ENCODE measurements at regions of chr1 and their contacts with region 1.

Region 1: DNA sequence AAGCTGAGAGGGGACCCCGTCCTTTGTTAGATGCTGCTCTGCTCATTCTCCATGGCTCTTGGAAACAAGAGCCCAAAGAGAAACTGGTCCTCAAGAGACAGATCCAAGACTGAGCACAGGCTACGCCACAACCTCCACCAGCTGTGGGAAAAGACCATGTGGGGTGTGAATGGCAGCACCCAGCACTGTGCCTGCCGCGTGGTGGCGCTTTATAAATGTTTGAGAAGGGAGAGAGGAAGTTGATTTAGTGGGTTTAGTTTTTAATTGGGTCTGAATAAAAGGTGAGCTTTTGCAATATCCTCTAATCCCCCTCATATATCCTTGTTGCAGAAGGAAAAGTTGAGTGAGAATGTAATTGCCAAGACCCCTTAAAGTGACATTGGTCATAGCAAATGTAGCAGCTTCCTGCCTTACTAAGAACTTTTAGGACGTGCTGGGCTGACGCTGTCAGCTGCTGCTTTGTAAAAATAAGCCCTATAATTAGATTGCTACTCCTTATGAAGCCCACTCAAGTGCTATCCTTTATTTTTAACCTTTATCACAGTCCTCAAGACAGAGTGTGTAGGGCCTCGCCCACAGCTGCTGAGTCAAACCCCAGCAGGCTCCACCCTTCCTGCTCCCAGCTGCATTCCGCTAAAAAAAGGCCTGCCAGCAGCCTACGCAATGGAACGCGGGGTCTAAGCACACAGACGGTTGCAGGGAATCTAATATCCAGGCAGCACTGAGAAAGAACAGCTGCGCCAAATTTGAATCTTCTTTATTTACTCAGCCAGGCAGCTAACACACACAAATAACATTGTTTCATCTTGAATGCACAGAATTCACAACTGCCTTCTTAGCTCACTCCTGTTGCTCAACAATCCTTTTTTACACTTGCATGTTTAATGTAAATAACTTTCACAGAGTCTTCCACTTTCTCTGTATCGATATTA is 47.4 kb upstream of the PRDX6 start:
- DNase-seq: no peak
- ATAC-seq: peak; percentile 92
- H3K4me3 ChIP-seq: no peak overlapping the region
- H3K27ac ChIP-seq: peak overlapping the region; percentile 7
- H3K4me1 ChIP-seq: peaks cover 19% of the 10 kb centered on the region
- H3K27me3 ChIP-seq: no peaks in the 10 kb centered on the region
- CTCF ChIP-seq: peak; percentile 64 to 76 (median 75)
- EP300 ChIP-seq: no peak
- POLR2A ChIP-seq: peak; percentile 17; the same call in 1 of the 2 replicates
- RAD21 ChIP-seq: peak; percentile 46

Region 2: GRCh38 chr1:173255214-173255813 is 174.4 kb before region 1 on chr1:
- CTCF ChIA-PET with region 1: interaction called, 17 read pairs
- POLR2A ChIA-PET with region 1: no interaction called
- RAD21 ChIA-PET with region 1: interaction called, 12 read pairs
- SMC1A ChIA-PET with region 1: interaction called, 9 read pairs
- in situ Hi-C with region 1: no loop called
- intact Hi-C with region 1: no loop called
- DNase-seq: peak; percentile 16
- ATAC-seq: peak; percentile 67
- H3K4me3 ChIP-seq: no peak overlapping the region
- H3K27ac ChIP-seq: no peak overlapping the region
- H3K4me1 ChIP-seq: peaks cover 4% of the 10 kb centered on the region; the same call in 1 of the 2 replicates
- H3K27me3 ChIP-seq: no peaks in the 10 kb centered on the region
- CTCF ChIP-seq: peak; percentile 67 to 80 (median 70)
- EP300 ChIP-seq: no peak
- POLR2A ChIP-seq: no peak
- RAD21 ChIP-seq: peak; percentile 68

Region 3: GRCh38 chr1:173485307-173485805 is 55.6 kb after region 1 on chr1:
- CTCF ChIA-PET with region 1: interaction called, 11 read pairs
- POLR2A ChIA-PET with region 1: no interaction called
- RAD21 ChIA-PET with region 1: no interaction called
- SMC1A ChIA-PET with region 1: interaction called, 8 read pairs
- in situ Hi-C with region 1: no loop called
- intact Hi-C with region 1: no loop called
- DNase-seq: no peak
- ATAC-seq: no peak
- H3K4me3 ChIP-seq: no peak overlapping the region
- H3K27ac ChIP-seq: no peak overlapping the region
- H3K4me1 ChIP-seq: peaks cover 4% of the 10 kb centered on the region
- H3K27me3 ChIP-seq: no peaks in the 10 kb centered on the region
- CTCF ChIP-seq: no peak
- EP300 ChIP-seq: no peak
- POLR2A ChIP-seq: no peak
- RAD21 ChIP-seq: no peak

Region 4: GRCh38 chr1:173824331-173825081 is 394.8 kb after region 1 on chr1 and contains the starts of genes CENPL and DARS2:
- CTCF ChIA-PET with region 1: interaction called, 25 read pairs
- POLR2A ChIA-PET with region 1: no interaction called
- RAD21 ChIA-PET with region 1: interaction called, 31 read pairs
- SMC1A ChIA-PET with region 1: interaction called, 5 read pairs
- in situ Hi-C with region 1: loop called (anchors 5 kb)
- intact Hi-C with region 1: loop called (anchors 2 kb)
- DNase-seq: peak; percentile 94
- ATAC-seq: peak; percentile 87
- H3K4me3 ChIP-seq: peak within 1 kb of the TSS; percentile 92
- H3K27ac ChIP-seq: peak within 1 kb of the TSS; percentile 91
- H3K4me1 ChIP-seq: no peaks in the 10 kb centered on the region; the same call in 1 of the 2 replicates
- H3K27me3 ChIP-seq: no peaks in the 10 kb centered on the region
- CTCF ChIP-seq: no peak
- EP300 ChIP-seq: no peak; a peak in 1 of 4 replicates
- POLR2A ChIP-seq: peak; percentile 83
- RAD21 ChIP-seq: no peak
- polyA plus RNA-seq, gene CENPL: 14.9 to 26.7 TPM
- polyA plus RNA-seq, gene DARS2: 23.9 to 25.2 TPM

Region 5: DNA sequence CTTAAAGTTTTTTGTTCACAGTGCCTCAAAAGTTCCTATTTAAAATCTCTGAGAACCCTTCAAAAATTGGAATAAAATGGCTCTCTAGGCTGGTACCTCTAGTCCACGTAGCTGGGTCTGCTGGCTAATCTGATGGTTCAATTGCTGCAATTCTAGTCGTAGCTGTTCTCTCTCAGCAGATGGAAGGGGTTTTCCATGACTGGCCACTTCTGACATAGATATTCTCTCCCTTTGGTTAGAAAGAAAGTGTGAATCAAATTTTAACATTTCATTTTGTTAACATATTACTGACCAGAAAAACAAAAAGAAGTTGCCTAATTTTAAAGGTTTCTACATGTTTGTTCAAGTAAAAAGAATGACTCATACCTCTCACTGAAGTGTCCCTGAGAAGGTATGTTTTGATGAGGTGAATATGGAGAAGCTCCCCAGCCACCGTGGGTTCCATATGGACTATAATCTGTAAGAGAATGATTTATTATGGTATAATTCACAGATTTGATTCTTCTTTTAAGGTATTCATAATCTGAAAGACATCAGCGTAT is 516.7 kb after region 1 on chr1:
- CTCF ChIA-PET with region 1: no interaction called
- POLR2A ChIA-PET with region 1: no interaction called
- RAD21 ChIA-PET with region 1: no interaction called
- SMC1A ChIA-PET with region 1: no interaction called
- in situ Hi-C with region 1: no loop called
- intact Hi-C with region 1: loop called (anchors 10 kb)
- DNase-seq: no peak
- ATAC-seq: no peak
- H3K4me3 ChIP-seq: no peak overlapping the region
- H3K27ac ChIP-seq: no peak overlapping the region
- H3K4me1 ChIP-seq: no peaks in the 10 kb centered on the region
- H3K27me3 ChIP-seq: no peaks in the 10 kb centered on the region
- CTCF ChIP-seq: no peak
- EP300 ChIP-seq: no peak
- POLR2A ChIP-seq: no peak
- RAD21 ChIP-seq: no peak

Region 6: DNA sequence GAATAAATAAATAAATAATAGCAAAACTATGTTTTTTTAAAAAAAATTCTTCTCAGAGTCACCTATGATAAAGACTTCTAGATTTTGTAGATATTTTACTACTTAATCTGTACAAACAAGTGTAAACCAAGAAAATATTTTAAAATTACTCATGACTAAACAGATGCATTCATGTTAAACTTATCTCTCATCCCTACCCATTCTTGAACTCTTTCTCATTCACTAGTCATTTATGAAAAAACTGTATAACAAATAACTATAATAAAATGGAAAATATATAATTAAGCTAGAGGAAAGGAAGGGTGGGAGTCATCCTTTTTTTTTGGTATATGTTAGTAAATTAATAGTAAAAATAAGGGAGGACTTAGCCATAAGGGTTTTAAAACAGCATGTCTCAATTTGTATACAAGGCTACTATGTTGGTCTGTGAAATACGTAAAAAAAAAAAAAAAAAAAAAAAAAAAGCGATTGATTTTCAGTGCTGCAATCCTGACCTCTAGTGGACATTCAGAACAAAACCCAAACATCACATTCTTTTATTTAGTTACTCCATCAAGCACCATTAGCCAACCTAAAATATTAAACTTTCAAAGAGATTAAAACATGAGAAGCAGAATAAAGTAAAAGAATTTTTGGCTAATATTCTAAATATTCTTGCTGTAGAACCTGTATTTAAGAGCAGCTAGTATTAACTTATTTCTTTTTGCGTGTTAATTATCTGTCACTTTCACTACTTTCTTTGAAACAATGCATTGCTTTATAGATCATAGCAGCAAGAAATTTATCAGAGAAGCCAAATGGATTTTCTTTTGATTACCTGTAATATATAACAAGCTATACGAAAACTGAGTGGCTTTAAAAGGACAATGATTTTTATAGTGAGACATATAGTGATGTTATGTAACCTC is 1314.2 kb after region 1 on chr1:
- CTCF ChIA-PET with region 1: no interaction called
- POLR2A ChIA-PET with region 1: no interaction called
- RAD21 ChIA-PET with region 1: no interaction called
- SMC1A ChIA-PET with region 1: no interaction called
- in situ Hi-C with region 1: loop called (anchors 10 kb)
- intact Hi-C with region 1: no loop called
- DNase-seq: no peak
- ATAC-seq: peak; percentile 39
- H3K4me3 ChIP-seq: no peak overlapping the region
- H3K27ac ChIP-seq: no peak overlapping the region
- H3K4me1 ChIP-seq: peaks cover 9% of the 10 kb centered on the region; the same call in 1 of the 2 replicates
- H3K27me3 ChIP-seq: no peaks in the 10 kb centered on the region
- CTCF ChIP-seq: peak; percentile 36 to 63 (median 41); a peak in 5 of 6 replicates
- EP300 ChIP-seq: no peak
- POLR2A ChIP-seq: no peak
- RAD21 ChIP-seq: peak; percentile 80